OCI-LY7 (cell line): ENCODE measurements at regions of chrX and their contacts with region 1.

Region 1: DNA sequence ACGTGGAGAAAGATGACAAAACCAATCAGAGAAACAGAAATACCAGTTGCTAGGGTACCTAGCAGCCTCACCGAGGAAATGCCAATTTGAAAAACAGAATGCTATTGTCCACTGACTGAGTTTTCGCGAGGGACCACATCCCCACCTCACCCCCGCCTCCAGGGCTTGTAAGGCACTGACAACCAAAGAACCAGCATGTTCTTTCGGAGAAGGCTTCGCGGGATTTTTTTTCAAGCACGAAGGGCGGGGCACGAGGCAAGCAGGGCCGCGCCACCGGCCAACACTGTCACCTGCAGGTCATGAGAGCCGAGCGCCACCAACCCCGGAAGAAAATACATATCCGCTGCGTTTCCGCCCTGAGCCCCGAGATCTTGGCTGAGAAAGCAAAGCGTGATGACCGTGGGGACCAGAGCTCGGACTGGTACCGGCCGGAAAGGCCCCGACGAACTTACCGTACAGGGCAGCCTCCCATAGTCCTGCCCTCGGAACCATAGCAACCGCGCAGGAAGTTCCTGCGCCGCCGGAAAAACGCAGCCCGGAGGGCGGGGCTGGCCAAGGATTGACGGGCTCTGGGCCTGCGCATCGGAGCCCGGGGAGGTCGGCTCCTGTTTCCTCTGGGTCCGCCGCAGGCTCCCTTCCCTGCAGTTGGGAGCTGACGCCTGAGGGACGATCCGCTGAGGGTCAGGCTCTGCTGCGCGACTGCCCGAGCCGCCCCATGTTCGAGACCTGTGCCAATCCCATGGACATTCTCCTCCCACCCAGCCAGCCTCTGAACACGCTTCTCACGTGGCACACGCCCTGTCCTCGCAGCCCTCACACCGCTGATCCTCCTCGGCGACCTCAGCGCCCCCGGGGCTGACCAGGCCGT is 59.2 kb upstream of the PAGE5 start:
- DNase-seq: peak; percentile 87
- H3K4me3 ChIP-seq: peak overlapping the region; percentile 73
- H3K27ac ChIP-seq: peak overlapping the region; percentile 90
- H3K4me1 ChIP-seq: peaks cover 14% of the 10 kb centered on the region
- CTCF ChIP-seq: peak; percentile 70

Region 2: GRCh38 chrX:54044126-54044876 is 1116.6 kb before region 1 on chrX and contains the start of gene PHF8:
- CTCF ChIA-PET with region 1: no interaction called
- POLR2A ChIA-PET with region 1: no interaction called
- intact Hi-C with region 1: loop called (anchors 5 kb)
- DNase-seq: peak; percentile 94
- H3K4me3 ChIP-seq: peak within 1 kb of the TSS; percentile 92
- H3K27ac ChIP-seq: peak within 1 kb of the TSS; percentile 88
- H3K4me1 ChIP-seq: peaks cover 13% of the 10 kb centered on the region
- CTCF ChIP-seq: no peak
- total RNA-seq, gene PHF8: 29.7 and 47.0 TPM in 2 replicates

Region 3: DNA sequence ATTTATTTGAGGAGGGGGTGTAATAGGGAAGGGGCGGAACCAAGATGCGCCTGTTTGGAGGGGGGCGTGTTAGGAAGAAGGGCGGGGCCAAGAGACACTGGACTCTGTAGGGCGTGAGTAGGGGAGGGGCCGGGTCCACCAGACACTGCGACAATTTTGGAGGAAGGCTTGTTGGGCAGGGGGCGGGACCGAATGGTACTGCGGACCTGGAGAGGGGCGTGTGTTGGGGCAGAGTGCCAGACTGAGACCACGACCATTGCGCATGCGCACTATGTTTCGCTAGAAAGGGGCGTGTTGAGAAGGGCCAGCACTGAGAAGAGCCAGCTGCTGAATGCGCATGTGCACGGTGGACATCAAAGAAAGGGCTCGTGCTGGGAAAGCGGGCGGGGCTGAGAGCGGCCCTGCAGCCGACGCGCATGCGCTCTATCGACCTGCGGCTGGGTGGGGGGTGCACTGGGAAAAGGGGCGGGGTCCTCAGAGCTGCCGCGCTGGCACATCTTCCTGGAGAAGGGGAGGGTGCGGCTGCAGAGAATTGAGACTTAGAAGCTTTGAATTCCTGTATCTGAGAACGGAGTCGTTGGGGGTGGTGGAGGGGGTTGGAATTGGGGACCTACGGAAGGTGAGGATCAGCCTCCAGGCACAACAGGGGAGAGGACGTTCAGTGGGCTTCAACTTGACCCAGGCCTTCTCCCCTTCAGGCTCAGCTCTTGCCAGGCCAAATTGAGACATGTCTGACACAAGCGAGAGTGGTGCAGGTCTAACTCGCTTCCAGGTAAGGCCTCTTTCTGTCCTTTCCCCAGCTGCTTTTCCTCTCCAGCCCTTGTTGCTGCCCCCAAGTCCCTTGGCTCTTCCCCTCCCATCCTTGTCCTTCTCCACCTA is 352.1 kb before region 1 on chrX:
- CTCF ChIA-PET with region 1: no interaction called
- POLR2A ChIA-PET with region 1: no interaction called
- intact Hi-C with region 1: loop called (anchors 5 kb)
- DNase-seq: peak; percentile 93
- H3K4me3 ChIP-seq: peak overlapping the region; percentile 82
- H3K27ac ChIP-seq: no peak overlapping the region
- H3K4me1 ChIP-seq: peaks cover 14% of the 10 kb centered on the region
- CTCF ChIP-seq: no peak

Region 4: GRCh38 chrX:55201930-55202579 is 41.1 kb after region 1 on chrX:
- CTCF ChIA-PET with region 1: no interaction called
- POLR2A ChIA-PET with region 1: no interaction called
- intact Hi-C with region 1: no loop called
- DNase-seq: no peak
- H3K4me3 ChIP-seq: no peak overlapping the region
- H3K27ac ChIP-seq: no peak overlapping the region
- H3K4me1 ChIP-seq: no peaks in the 10 kb centered on the region
- CTCF ChIP-seq: no peak